CD4-positive, alpha-beta memory T cell (primary cell): ENCODE measurements at regions of chr2 and their contacts with region 1.

Region 1: GRCh38 chr2:27703638-27704341 is 40.1 kb downstream of the SLC4A1AP start:
- DNase-seq: peak; percentile 74 to 79 (median 76)
- H3K4me3 ChIP-seq: no peak overlapping the region
- H3K4me3 Mint-ChIP-seq: no peak overlapping the region
- H3K27ac ChIP-seq: no peak overlapping the region
- H3K27ac Mint-ChIP-seq: peak overlapping the region in 1 of 7 donors; percentile 2
- H3K4me1 ChIP-seq: peaks cover 8% of the 10 kb centered on the region
- H3K4me1 Mint-ChIP-seq: peaks cover 3 to 11% (median 3%) of the 10 kb centered on the region in 4 donors
- H3K27me3 ChIP-seq: no peaks in the 10 kb centered on the region
- H3K27me3 Mint-ChIP-seq: no peaks in the 10 kb centered on the region

Region 2: DNA sequence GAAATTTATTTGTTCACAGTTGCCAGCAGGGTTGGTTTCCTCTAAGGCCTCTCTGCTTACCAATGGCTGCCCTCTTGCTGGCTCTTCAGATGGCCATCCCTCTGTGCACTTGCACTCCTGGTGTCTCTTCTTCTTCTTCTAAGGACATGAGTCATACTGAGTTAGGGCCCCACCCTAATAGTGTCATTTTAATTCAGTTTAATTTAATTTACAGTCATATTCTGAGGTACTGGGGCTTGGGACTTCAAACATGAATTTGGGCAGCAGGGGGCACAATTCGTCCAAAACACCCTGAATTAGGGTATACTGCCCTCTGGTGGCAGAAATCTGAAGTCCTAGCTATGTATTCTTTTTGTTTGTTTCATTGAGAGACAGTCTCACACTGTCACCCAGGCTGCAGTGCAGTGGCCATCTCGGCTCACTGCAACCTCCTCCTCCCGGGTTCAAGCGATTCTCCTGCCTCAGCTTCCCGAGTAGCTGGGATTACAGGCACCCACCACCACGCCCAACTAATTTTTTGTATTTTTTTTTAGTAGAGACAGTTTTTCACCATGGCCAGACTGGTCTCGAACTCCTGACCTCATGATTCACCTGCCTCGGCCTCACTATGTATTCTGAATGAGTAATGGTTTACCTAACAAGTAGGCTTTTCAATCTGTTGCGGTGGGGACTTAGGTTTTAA is 20.3 kb before region 1 on chr2:
- CTCF ChIA-PET with region 1: interaction called, 28 read pairs
- POLR2A ChIA-PET with region 1: no interaction called
- intact Hi-C with region 1: no loop called
- DNase-seq: peak; percentile 84 to 87 (median 86)
- H3K4me3 ChIP-seq: no peak overlapping the region
- H3K4me3 Mint-ChIP-seq: peak overlapping the region in 1 of 8 donors; percentile 36
- H3K27ac ChIP-seq: no peak overlapping the region
- H3K27ac Mint-ChIP-seq: peak overlapping the region; percentile 62 to 93 (median 88)
- H3K4me1 ChIP-seq: peaks cover 26% of the 10 kb centered on the region
- H3K4me1 Mint-ChIP-seq: peaks cover 12 to 21% (median 16%) of the 10 kb centered on the region in 4 donors
- H3K27me3 ChIP-seq: no peaks in the 10 kb centered on the region
- H3K27me3 Mint-ChIP-seq: no peaks in the 10 kb centered on the region

Region 3: DNA sequence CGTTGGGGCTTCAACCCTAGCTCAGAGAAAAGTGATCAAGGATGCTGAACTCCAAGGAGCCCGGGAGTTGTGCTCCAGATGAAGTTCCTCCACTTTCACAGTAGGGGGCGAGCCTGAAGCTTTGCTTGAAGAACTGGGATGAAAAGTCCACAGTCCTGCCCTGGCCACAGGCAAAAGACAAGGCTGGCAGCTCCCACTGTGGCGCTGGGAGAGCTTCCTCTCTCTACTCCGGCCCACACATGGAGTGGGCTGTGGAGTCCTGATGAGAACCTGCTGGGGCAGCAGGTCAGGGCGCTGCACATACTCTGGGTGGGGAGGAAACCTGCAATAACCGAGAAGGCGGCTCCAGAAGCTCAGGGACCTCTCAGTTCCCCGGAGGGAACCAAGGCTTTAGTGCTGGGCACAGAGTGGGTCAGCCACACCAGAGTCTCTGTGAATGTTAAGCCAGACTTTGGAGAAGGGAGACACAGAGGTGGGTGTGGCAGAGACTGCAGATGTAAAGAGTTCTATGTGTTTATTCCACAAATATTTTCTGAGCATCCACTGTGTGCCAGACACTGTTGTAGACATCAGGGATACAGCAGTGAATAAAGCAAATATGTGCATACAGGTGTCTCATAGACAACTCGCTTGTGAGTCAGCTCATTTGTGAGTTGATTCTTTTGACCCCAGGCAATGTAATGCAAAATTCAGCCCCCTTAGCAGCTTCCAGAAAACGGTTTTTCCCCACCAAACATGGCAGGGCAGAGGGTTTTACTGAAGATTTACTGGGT is 19.8 kb after region 1 on chr2:
- CTCF ChIA-PET with region 1: interaction called, 15 read pairs
- POLR2A ChIA-PET with region 1: no interaction called
- intact Hi-C with region 1: no loop called
- DNase-seq: no peak
- H3K4me3 ChIP-seq: no peak overlapping the region
- H3K4me3 Mint-ChIP-seq: no peak overlapping the region
- H3K27ac ChIP-seq: no peak overlapping the region
- H3K27ac Mint-ChIP-seq: no peak overlapping the region
- H3K4me1 ChIP-seq: no peaks in the 10 kb centered on the region
- H3K4me1 Mint-ChIP-seq: peaks cover 0 to 6% (median under 1%) of the 10 kb centered on the region in 4 donors
- H3K27me3 ChIP-seq: no peaks in the 10 kb centered on the region
- H3K27me3 Mint-ChIP-seq: peaks cover 7 to 12% of the 10 kb centered on the region in 2 donors

Region 4: DNA sequence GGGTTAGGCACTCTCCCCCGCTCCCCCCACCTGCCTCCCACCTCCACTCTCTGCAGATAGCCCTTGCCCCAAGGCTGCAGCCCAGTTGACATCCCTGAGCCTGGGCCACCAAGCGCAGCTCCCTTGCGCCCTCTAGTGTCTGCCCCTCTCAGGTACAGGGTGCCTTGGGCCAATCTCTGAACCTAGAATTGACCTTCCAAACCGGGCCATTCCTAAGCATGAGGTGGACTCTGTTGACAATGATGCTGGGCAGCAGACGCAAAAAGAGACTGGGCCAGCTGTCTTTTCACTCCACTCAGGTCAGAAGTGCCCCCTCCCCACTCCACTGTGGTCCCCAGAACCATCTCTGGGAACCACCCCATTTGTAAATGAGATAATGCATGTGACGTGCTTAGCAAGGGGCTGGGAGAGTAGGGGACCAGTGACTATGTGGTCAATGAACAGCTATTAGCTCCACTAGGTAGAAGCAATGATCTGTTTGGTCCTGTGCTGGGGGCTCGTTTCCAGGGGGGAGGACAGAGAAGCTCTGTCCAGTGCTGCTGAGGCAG is 748.8 kb after region 1 on chr2:
- CTCF ChIA-PET with region 1: interaction called, 31 read pairs
- POLR2A ChIA-PET with region 1: interaction called, 6 read pairs
- intact Hi-C with region 1: loop called (anchors 1 kb)
- DNase-seq: peak; percentile 60 to 72 (median 67)
- H3K4me3 ChIP-seq: no peak overlapping the region
- H3K4me3 Mint-ChIP-seq: no peak overlapping the region
- H3K27ac ChIP-seq: no peak overlapping the region
- H3K27ac Mint-ChIP-seq: peak overlapping the region in 2 of 7 donors; percentile 13 to 36
- H3K4me1 ChIP-seq: peaks cover 6% of the 10 kb centered on the region
- H3K4me1 Mint-ChIP-seq: peaks cover 0 to 21% (median 5%) of the 10 kb centered on the region in 4 donors
- H3K27me3 ChIP-seq: no peaks in the 10 kb centered on the region
- H3K27me3 Mint-ChIP-seq: no peaks in the 10 kb centered on the region

Region 5: GRCh38 chr2:28610583-28611201 is 906.9 kb after region 1 on chr2:
- CTCF ChIA-PET with region 1: no interaction called
- POLR2A ChIA-PET with region 1: no interaction called
- intact Hi-C with region 1: no loop called
- DNase-seq: no peak
- H3K4me3 ChIP-seq: no peak overlapping the region
- H3K4me3 Mint-ChIP-seq: peak overlapping the region in 1 of 8 donors; percentile 8
- H3K27ac ChIP-seq: no peak overlapping the region
- H3K27ac Mint-ChIP-seq: peak overlapping the region in 6 of 7 donors; percentile 34 to 73 (median 48)
- H3K4me1 ChIP-seq: peaks cover 37% of the 10 kb centered on the region
- H3K4me1 Mint-ChIP-seq: peaks cover 5 to 32% (median 21%) of the 10 kb centered on the region in 4 donors
- H3K27me3 ChIP-seq: no peaks in the 10 kb centered on the region
- H3K27me3 Mint-ChIP-seq: no peaks in the 10 kb centered on the region